ENCODE measurements at regions of chr1 and their contacts with region 1.

Region 1: DNA sequence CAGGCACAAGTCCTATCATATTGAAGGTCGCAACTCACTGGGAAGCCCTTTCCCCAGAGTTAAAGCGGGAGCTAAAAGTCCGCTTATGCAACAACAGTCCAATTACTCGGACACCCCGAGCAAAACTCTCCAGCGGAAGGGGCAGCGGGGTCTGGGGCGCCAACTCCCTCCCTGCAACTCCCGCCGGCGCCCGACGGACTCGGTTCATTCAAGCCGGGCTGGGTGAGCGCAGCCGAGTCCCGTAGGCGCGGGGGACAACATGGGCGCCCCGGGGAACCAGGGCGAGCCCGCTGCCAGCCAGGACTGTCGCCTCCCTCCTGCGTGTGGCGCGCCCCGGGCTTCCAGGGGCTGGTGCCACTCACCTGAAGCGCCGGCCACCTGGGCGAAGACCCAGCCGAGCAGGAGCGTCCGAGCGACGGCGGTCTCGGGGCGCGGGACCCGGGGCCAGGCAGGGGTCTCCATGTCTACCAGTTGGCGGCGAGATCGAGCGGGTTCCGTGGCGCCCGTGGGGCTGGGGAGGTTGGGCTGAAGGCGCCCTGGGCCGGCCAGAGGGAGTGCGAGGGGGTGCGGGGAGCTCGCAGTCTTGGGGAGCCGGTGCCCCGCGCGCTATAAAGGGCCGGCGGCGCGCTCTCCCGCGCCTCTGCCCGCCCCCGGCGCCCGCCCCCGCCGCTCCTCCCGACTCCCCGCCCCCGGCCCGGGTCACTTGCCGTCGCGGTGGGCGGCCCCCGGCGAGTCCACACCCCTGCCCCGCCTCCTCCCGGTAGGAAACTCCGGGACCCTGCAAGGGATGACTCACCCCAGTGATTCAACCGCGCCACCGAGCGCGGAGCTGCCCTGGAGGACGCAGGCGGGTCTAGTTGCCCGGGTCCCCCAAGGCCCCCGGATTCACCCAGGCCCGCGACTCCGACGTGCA is at the start of gene F3:
- DNase-seq: no peak
- H3K4me3 ChIP-seq: peak within 1 kb of the TSS; percentile 66
- CTCF ChIP-seq: peak; percentile 15

Region 2: GRCh38 chr1:94237291-94238226 is 303.9 kb before region 1 on chr1 and contains the start of gene ARHGAP29:
- CTCF ChIA-PET with region 1: no interaction called
- POLR2A ChIA-PET with region 1: no interaction called
- DNase-seq: no peak
- H3K4me3 ChIP-seq: peak within 1 kb of the TSS; percentile 83
- CTCF ChIP-seq: no peak

Region 3: GRCh38 chr1:94411237-94411636 is 130.2 kb before region 1 on chr1:
- CTCF ChIA-PET with region 1: no interaction called
- POLR2A ChIA-PET with region 1: no interaction called
- DNase-seq: no peak
- H3K4me3 ChIP-seq: no peak overlapping the region
- CTCF ChIP-seq: no peak

Region 4: DNA sequence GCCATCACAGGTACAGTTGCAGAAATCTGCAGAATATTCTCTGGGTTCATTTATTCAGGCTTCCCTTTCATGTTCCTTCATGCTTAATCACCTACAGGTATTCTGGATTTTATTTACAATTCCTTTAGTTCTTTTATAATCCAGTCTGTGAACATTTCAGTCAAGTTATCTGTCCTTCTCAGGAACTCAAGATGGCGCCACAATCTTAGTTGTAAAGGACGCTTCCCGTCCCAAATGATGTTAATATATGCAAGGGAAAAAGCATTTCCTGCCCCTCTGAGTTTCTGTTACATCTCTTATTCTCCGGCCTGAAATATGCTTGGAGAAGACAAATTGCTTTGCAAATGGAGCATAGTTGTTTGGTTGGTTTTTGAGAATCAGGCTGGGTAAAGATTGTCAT is 19.1 kb before region 1 on chr1:
- CTCF ChIA-PET with region 1: interaction called, 13 read pairs
- POLR2A ChIA-PET with region 1: no interaction called
- DNase-seq: no peak
- H3K4me3 ChIP-seq: no peak overlapping the region
- CTCF ChIP-seq: peak; percentile 56

Region 5: GRCh38 chr1:94974824-94975223 is 433.4 kb after region 1 on chr1:
- CTCF ChIA-PET with region 1: no interaction called
- POLR2A ChIA-PET with region 1: no interaction called
- DNase-seq: peak; percentile 62
- H3K4me3 ChIP-seq: no peak overlapping the region
- CTCF ChIP-seq: no peak